Naive thymus-derived CD4-positive, alpha-beta T cell (primary cell): ENCODE measurements at regions of chr7 and their contacts with region 1.

Region 1: DNA sequence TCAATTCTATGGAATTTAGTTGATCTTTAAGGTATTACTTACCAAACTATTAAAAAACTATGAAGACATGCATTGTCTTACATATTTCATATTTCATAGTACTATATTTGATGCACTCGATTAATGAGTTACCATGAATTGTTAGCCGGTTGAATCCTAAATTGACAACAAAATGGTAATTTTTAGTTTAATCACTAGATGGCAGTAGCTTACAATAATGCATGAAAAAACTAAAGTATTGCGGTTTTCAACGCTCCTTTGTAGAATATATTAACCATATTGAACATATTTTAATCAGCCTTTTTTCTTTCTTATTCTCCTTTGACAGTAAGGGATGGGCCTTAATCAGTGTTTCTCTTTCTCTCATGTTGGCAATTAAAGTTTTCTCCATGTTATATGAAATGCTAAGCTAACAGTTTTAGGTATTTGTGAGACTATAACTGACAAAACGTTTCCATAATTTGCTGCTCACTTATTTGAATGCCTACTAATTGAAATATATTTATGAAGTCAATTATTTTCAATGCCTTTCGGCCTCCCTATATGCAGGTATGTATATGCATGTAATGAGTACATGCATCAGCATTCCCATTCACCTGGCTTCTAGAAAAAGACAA is 48.5 kb upstream of the ARL4A start:
- DNase-seq: peak in 6 of 9 donors; percentile 26 to 62 (median 54)
- ATAC-seq: peak; percentile 71
- H3K4me3 ChIP-seq: no peak overlapping the region
- H3K4me3 Mint-ChIP-seq: peak overlapping the region in 1 of 10 donors; percentile 50
- H3K27ac ChIP-seq: no peak overlapping the region
- H3K27ac Mint-ChIP-seq: no peak overlapping the region
- H3K4me1 ChIP-seq: peaks cover 0 to 7% of the 10 kb centered on the region in 2 donors
- H3K4me1 Mint-ChIP-seq: peaks cover 11 to 31% (median 23%) of the 10 kb centered on the region in 7 donors
- H3K27me3 ChIP-seq: no peaks in the 10 kb centered on the region
- H3K27me3 Mint-ChIP-seq: peaks cover 0 to 10% (median 0%) of the 10 kb centered on the region in 5 donors

Region 2: DNA sequence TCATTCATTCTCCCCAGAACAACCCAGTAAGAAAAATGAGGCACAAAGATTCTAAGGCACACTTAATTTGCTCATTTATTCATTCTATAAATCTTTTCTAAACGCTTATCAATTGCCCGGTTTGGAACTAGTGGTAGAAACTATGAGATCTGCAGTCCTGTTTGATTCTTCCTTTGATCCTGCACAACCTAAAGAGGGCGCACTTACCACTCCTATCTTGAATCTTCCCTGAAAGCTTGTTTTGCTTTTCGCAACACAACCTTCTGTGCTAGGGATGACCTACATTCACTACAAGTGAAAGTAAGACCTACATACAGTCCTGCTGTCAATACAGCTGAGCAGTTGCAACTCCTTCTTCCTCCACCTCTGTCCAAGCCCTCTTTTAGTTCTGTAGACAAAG is 35.9 kb after region 1 on chr7:
- CTCF ChIA-PET with region 1: no interaction called
- POLR2A ChIA-PET with region 1: no interaction called
- intact Hi-C with region 1: loop called in 1 of 2 experiments (anchors 2 kb)
- DNase-seq: peak in 7 of 9 donors; percentile 31 to 64 (median 50)
- ATAC-seq: peak; percentile 92
- H3K4me3 ChIP-seq: no peak overlapping the region
- H3K4me3 Mint-ChIP-seq: no peak overlapping the region
- H3K27ac ChIP-seq: no peak overlapping the region
- H3K27ac Mint-ChIP-seq: peak overlapping the region in 2 of 9 donors; percentile 0
- H3K4me1 ChIP-seq: peaks cover 0 to 4% of the 10 kb centered on the region in 2 donors
- H3K4me1 Mint-ChIP-seq: peaks cover 7 to 13% (median 9%) of the 10 kb centered on the region in 7 donors
- H3K27me3 ChIP-seq: no peaks in the 10 kb centered on the region
- H3K27me3 Mint-ChIP-seq: peaks cover 0 to 13% (median 0%) of the 10 kb centered on the region in 5 donors

Region 3: GRCh38 chr7:12715372-12716133 is 76.6 kb after region 1 on chr7:
- CTCF ChIA-PET with region 1: no interaction called
- POLR2A ChIA-PET with region 1: no interaction called
- intact Hi-C with region 1: no loop called
- DNase-seq: peak in 1 of 9 donors; percentile 34
- ATAC-seq: peak; percentile 70
- H3K4me3 ChIP-seq: no peak overlapping the region
- H3K4me3 Mint-ChIP-seq: peak overlapping the region in 4 of 10 donors; percentile 7 to 63 (median 44)
- H3K27ac ChIP-seq: no peak overlapping the region
- H3K27ac Mint-ChIP-seq: peak overlapping the region in 2 of 9 donors; percentile 7 to 76
- H3K4me1 ChIP-seq: peaks cover 0 to 8% of the 10 kb centered on the region in 2 donors
- H3K4me1 Mint-ChIP-seq: peaks cover 0 to 43% (median 20%) of the 10 kb centered on the region in 7 donors
- H3K27me3 ChIP-seq: no peaks in the 10 kb centered on the region
- H3K27me3 Mint-ChIP-seq: no peaks in the 10 kb centered on the region

Region 4: GRCh38 chr7:13057462-13058200 is 418.7 kb after region 1 on chr7:
- CTCF ChIA-PET with region 1: no interaction called
- POLR2A ChIA-PET with region 1: no interaction called
- intact Hi-C with region 1: loop called in 1 of 2 experiments (anchors 5 kb)
- DNase-seq: no peak
- ATAC-seq: no peak
- H3K4me3 ChIP-seq: no peak overlapping the region
- H3K4me3 Mint-ChIP-seq: peak overlapping the region; percentile 25 to 83 (median 60)
- H3K27ac ChIP-seq: no peak overlapping the region
- H3K27ac Mint-ChIP-seq: peak overlapping the region in 6 of 9 donors; percentile 20 to 91 (median 44)
- H3K4me1 ChIP-seq: peaks cover 0 to 3% of the 10 kb centered on the region in 2 donors
- H3K4me1 Mint-ChIP-seq: peaks cover 7 to 17% (median 14%) of the 10 kb centered on the region in 7 donors
- H3K27me3 ChIP-seq: no peaks in the 10 kb centered on the region
- H3K27me3 Mint-ChIP-seq: peaks cover 0 to 9% (median 7%) of the 10 kb centered on the region in 5 donors

Region 5: GRCh38 chr7:13179102-13179501 is 540.1 kb after region 1 on chr7:
- CTCF ChIA-PET with region 1: no interaction called
- POLR2A ChIA-PET with region 1: no interaction called
- intact Hi-C with region 1: loop called in 1 of 2 experiments (anchors 1 kb)
- DNase-seq: no peak
- ATAC-seq: no peak
- H3K4me3 ChIP-seq: no peak overlapping the region
- H3K4me3 Mint-ChIP-seq: no peak overlapping the region
- H3K27ac ChIP-seq: no peak overlapping the region
- H3K27ac Mint-ChIP-seq: no peak overlapping the region
- H3K4me1 ChIP-seq: no peaks in the 10 kb centered on the region
- H3K4me1 Mint-ChIP-seq: no peaks in the 10 kb centered on the region
- H3K27me3 ChIP-seq: no peaks in the 10 kb centered on the region
- H3K27me3 Mint-ChIP-seq: peaks cover 0 to 24% (median 12%) of the 10 kb centered on the region in 5 donors

Region 6: GRCh38 chr7:13725591-13725990 is 1086.6 kb after region 1 on chr7:
- CTCF ChIA-PET with region 1: no interaction called
- POLR2A ChIA-PET with region 1: no interaction called
- intact Hi-C with region 1: loop called in 1 of 2 experiments (anchors 5 kb)
- DNase-seq: no peak
- ATAC-seq: no peak
- H3K4me3 ChIP-seq: no peak overlapping the region
- H3K4me3 Mint-ChIP-seq: no peak overlapping the region
- H3K27ac ChIP-seq: no peak overlapping the region
- H3K27ac Mint-ChIP-seq: no peak overlapping the region
- H3K4me1 ChIP-seq: no peaks in the 10 kb centered on the region
- H3K4me1 Mint-ChIP-seq: no peaks in the 10 kb centered on the region
- H3K27me3 ChIP-seq: no peaks in the 10 kb centered on the region
- H3K27me3 Mint-ChIP-seq: no peaks in the 10 kb centered on the region

Region 7: DNA sequence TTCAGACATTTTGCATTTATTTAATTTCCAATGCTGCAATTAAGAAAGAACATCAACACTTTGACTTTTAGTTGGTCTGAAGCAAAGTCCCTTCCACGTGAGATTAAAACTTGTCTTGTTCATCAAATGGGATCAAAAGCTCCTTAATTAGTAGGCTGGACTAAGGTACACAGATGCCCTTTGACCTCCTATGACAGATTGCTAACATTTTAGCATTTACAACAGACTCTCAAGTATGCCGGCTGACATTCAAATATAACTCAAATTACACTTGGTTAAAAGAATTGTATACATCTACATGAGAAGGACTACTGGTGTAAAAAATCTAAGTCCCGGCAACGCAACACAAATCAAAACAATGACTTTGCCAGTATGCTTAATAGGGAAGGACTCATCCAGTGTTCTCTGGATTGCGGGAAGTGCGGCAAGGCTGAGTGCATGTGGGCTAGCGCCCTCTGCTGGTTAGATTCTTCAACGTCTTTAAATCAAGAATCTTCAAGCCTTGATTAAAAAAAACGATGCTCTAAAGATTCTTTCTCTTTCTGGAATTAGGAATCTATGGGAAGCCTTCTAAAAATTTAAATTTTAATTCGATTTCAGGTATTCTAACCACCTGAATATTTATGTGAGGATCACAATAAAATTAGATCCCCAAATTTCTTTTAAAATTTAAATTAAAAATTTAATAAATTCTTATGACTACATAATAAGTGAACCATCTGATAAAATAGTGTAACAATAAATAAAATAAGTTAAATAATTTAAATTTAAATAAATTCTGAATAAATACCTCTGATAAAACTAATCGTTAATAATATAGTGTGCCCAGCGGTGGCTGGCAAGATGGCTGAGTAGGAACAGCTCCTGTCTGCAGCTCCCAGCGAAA is 1818.9 kb after region 1 on chr7:
- CTCF ChIA-PET with region 1: no interaction called
- POLR2A ChIA-PET with region 1: no interaction called
- intact Hi-C with region 1: loop called in 1 of 2 experiments (anchors 2 kb)
- DNase-seq: peak in 4 of 9 donors; percentile 10 to 22 (median 18)
- ATAC-seq: peak; percentile 49
- H3K4me3 ChIP-seq: no peak overlapping the region
- H3K4me3 Mint-ChIP-seq: no peak overlapping the region
- H3K27ac ChIP-seq: no peak overlapping the region
- H3K27ac Mint-ChIP-seq: no peak overlapping the region
- H3K4me1 ChIP-seq: no peaks in the 10 kb centered on the region
- H3K4me1 Mint-ChIP-seq: peaks cover 0 to 4% (median 0%) of the 10 kb centered on the region in 7 donors
- H3K27me3 ChIP-seq: no peaks in the 10 kb centered on the region
- H3K27me3 Mint-ChIP-seq: peaks cover 0 to 4% (median 0%) of the 10 kb centered on the region in 5 donors